ENCODE measurements at regions of chr21 and their contacts with region 1.

Region 1: GRCh38 chr21:41283211-41283818 is 33.3 kb upstream of the FAM3B start:
- DNase-seq: peak; percentile 72
- H3K4me3 ChIP-seq: no peak overlapping the region
- H3K27ac ChIP-seq: no peak overlapping the region
- H3K4me1 ChIP-seq: no peaks in the 10 kb centered on the region
- H3K27me3 ChIP-seq: peaks cover 20% of the 10 kb centered on the region; the same call in 1 of the 2 replicates
- CTCF ChIP-seq: peak; percentile 77
- EP300 ChIP-seq: no peak
- RAD21 ChIP-seq: peak; percentile 92

Region 2: DNA sequence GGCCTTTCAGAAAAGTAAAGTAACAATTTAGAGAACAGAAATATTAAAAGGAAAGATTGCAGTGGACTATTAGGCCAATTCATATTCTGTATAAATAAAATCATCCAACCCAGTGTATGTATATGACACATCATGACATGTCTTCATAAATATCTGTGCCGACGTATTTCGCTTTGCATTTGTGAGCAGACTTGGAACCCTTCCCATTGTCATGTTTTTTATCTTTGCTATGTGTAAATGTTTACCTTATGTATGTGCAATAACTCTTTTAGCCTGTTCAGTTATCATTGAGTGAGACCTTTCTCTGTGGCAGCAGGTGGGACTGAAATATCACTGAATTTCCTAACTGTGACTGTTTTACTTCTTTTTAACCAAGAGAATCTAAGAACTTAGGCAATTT is 24.7 kb before region 1 on chr21:
- CTCF ChIA-PET with region 1: interaction called, 10 read pairs
- POLR2A ChIA-PET with region 1: no interaction called
- DNase-seq: no peak
- H3K4me3 ChIP-seq: no peak overlapping the region
- H3K27ac ChIP-seq: no peak overlapping the region
- H3K4me1 ChIP-seq: no peaks in the 10 kb centered on the region
- H3K27me3 ChIP-seq: no peaks in the 10 kb centered on the region
- CTCF ChIP-seq: no peak
- EP300 ChIP-seq: no peak
- RAD21 ChIP-seq: no peak

Region 3: GRCh38 chr21:41294539-41295231 is 11.4 kb after region 1 on chr21:
- CTCF ChIA-PET with region 1: interaction called, 26 read pairs
- POLR2A ChIA-PET with region 1: no interaction called
- DNase-seq: no peak
- H3K4me3 ChIP-seq: no peak overlapping the region
- H3K27ac ChIP-seq: no peak overlapping the region
- H3K4me1 ChIP-seq: no peaks in the 10 kb centered on the region
- H3K27me3 ChIP-seq: 0 out of 2 replicates have a peak, but pooled peaks cover 9% of the 10 kb centered on the region
- CTCF ChIP-seq: no peak
- EP300 ChIP-seq: no peak
- RAD21 ChIP-seq: no peak

Region 4: DNA sequence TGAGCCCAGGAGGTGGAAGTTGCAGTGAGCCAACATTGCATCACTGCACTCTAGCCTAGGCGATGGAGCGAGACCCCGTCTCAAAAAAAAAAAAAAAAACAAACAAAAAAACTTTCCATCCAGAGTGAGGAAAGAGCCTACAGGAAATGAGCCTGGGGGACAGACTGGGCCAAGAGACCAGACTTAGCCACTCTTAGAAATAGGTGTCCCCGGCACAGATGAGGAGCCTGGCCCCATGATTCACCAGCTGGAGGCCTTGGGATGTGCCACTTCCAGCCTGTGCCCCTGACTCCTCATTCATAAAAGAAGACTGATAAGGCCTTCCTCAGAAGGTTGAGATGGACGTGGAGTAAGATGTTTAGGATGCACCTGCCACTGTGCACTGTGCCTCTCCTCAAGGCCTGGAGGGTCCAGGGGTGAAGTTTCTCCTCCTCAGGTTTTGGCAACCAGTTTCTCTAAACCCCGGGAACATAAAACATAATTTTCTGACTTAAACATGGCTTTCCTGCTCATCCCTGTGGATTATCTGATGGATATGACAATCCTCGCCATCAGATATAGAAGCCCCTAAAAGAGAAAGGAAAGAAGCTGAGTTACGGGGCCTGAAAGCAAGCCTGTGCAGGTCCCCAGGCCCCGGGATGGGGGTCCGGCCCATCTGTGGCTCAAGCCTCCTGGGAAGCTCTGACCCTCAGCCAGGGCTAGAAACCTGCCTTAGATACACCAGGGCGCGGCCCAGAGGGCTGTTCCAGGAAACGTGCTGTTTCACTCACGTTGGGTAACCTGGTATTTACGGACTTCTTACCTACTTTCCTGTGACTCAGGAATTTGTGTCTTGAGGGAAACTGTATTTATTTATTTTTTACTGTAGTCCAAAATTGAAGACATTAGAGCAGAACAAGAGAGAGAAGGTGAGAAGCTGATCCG is 168.7 kb after region 1 on chr21:
- CTCF ChIA-PET with region 1: interaction called, 122 read pairs
- POLR2A ChIA-PET with region 1: no interaction called
- DNase-seq: no peak
- H3K4me3 ChIP-seq: no peak overlapping the region
- H3K27ac ChIP-seq: no peak overlapping the region
- H3K4me1 ChIP-seq: no peaks in the 10 kb centered on the region
- H3K27me3 ChIP-seq: no peaks in the 10 kb centered on the region
- CTCF ChIP-seq: no peak
- EP300 ChIP-seq: no peak
- RAD21 ChIP-seq: no peak

Region 5: DNA sequence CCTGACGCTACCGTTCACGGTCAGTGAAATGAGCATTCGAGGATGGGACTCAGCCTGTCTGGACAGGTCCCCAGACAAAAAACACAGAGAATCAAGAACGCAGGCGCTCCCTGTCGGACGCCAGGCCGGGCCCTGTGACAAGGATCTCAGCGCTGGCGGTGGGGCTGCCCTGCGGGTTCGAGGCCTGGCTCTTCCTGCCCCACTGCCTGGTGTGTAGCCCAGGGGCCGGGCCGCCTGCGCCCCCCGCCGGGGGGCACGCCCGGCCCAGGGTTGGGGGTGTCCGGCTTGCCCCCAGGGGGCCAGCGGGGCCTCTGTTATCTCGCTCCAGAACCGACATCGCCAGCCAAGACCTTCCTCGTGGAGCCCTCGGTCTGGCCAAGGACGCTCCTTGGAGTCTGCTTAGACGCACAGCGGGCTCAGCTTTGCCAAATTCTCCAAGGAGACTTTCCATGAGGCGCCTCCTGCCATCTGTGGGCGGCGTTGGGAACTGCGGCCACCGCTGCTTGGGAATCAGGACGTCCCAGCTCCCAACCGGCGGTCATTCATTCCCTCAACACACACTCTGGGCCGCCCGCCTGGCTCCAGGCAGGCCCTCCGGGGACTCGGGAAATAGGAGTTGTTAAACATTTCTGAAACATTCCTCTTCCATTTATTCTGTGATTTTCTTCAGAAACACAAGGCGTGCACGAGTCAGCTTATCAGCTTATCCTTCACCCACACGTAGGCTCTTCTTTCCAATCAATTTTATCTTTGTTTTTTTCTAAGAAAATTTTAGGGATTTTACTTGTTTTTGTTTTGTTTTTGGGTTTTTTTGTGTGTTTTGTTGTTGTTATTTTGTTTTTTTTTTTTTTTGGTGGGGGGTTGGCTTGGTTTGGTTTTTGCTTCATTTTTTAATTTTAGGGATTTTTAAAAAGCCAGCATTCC is 494.9 kb after region 1 on chr21:
- CTCF ChIA-PET with region 1: interaction called, 20 read pairs
- POLR2A ChIA-PET with region 1: no interaction called
- DNase-seq: peak; percentile 81
- H3K4me3 ChIP-seq: peak overlapping the region in 1 of 2 experiments; percentile 43; a peak in 1 of 4 replicates
- H3K27ac ChIP-seq: peak overlapping the region in 1 of 2 experiments; percentile 6; a peak in 1 of 4 replicates
- H3K4me1 ChIP-seq: 0 out of 4 replicates have a peak, but pooled peaks cover 0 to 3% of the 10 kb centered on the region in 2 experiments
- H3K27me3 ChIP-seq: no peaks in the 10 kb centered on the region
- CTCF ChIP-seq: peak; percentile 88
- EP300 ChIP-seq: no peak
- RAD21 ChIP-seq: peak; percentile 77

Measured in SK-N-SH (cell line).